Aorta (tissue), 5 donors: ENCODE measurements at regions of chr5 and their contacts with region 1.

Region 1: DNA sequence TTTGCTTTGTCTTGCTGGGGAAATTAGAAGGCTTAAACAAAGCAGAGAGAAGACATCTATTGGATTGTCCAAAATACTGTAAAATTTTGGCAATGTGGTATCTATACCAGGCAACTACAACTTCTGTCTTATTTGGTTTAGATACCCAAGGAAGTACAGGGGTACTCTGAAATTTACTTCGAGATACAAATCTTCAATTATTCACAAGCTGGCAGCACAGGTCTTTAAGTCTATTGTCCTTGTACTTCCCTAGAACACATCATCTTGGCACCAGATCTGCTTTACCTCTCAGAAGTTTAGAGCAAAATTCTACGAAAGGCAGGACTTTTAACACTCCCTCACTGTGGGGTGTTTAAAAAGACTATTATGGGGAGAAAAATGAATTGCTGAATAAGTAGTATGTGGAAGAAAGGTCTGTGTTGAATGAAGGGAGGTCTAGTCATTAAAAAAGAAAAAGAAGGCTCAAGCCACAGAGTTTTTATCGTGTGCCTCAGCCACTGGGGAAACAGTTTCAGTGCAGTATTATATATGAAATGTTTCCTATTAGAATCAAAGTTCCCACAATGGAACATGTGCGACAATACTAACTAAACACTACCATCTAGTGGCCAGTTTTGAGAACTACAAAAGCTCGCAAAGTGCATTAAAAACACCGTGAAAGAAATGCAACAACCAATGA is 93.7 kb downstream of the PDE4D start:
- DNase-seq: no peak
- ATAC-seq: peak; percentile 84
- H3K4me3 ChIP-seq: no peak overlapping the region
- H3K27ac ChIP-seq: no peak overlapping the region
- H3K4me1 ChIP-seq: peaks cover 0 to 4% of the 10 kb centered on the region in 2 donors
- H3K27me3 ChIP-seq: no peaks in the 10 kb centered on the region

Region 2: DNA sequence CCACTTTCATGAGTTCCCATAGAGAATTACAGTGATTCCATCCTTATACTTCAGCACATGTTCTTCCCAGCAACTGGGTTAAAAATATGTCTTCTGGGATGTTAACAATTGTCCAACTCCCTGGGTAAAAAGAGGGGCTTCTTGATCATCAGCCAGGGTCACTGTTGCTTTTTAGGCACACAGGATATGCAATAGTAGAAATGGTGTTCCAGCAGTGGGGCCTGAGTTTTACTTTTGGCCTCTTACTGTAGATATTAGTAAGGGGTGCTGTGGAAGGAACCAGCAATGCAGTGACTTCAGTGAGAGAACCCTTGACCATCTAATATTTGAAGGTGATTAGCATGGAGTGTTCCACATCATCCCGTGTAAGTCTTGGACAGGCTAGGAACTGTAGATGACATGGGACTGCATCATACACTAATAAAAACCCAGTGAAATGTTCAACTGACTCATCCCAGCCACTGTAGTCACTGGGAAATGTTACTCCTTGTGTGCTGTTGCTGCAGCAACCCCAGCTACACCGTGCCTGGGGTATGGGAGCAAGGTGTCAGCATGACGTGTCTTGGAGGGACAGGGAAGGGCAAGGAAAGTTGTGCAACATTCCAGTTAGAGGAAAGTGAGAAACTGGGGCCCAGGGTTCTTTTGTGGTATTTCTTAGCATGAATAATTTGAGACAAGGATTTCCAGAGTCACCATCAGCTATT is 606.0 kb before region 1 on chr5:
- intact Hi-C with region 1: loop called in 1 of 2 experiments (anchors 10 kb)
- DNase-seq: no peak
- ATAC-seq: no peak
- H3K4me3 ChIP-seq: no peak overlapping the region
- H3K27ac ChIP-seq: no peak overlapping the region
- H3K4me1 ChIP-seq: no peaks in the 10 kb centered on the region
- H3K27me3 ChIP-seq: no peaks in the 10 kb centered on the region

Region 3: GRCh38 chr5:59390074-59390659 is 409.6 kb before region 1 on chr5:
- intact Hi-C with region 1: loop called (anchors 2 kb)
- DNase-seq: no peak
- ATAC-seq: no peak
- H3K4me3 ChIP-seq: no peak overlapping the region
- H3K27ac ChIP-seq: no peak overlapping the region
- H3K4me1 ChIP-seq: no peaks in the 10 kb centered on the region
- H3K27me3 ChIP-seq: no peaks in the 10 kb centered on the region

Region 4: DNA sequence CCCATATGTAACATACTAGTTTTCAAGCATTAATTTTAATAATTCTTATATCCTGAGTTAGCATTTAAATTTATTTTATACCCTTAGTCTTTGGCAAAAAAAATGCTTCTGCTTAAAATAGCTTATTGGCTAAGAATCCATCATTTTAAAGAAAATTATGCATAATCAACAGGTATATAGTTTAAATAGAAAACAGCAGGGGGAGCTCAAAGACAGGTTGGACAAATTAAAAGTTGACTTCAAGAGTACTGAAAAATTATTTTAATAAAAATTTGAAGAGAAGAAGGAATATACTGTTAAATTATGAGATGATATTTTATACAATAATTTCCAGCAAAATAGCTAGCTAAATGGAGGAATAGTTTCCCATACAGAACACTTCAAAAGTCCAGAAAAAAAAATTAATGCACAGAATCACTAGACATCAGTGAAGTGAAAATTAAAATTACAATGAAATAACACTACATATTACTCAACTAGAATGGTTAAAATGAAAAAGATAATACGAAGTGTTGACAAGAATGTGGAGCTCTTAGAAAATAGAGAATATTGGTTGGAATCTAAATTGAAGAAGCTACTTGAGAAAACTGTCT is 293.4 kb before region 1 on chr5:
- intact Hi-C with region 1: loop called in 1 of 2 experiments (anchors 5 kb)
- DNase-seq: no peak
- ATAC-seq: no peak
- H3K4me3 ChIP-seq: no peak overlapping the region
- H3K27ac ChIP-seq: no peak overlapping the region
- H3K4me1 ChIP-seq: no peaks in the 10 kb centered on the region
- H3K27me3 ChIP-seq: no peaks in the 10 kb centered on the region

Region 5: GRCh38 chr5:59673438-59674058 is 126.3 kb before region 1 on chr5:
- intact Hi-C with region 1: loop called in 1 of 2 experiments (anchors 10 kb)
- DNase-seq: no peak
- ATAC-seq: no peak
- H3K4me3 ChIP-seq: no peak overlapping the region
- H3K27ac ChIP-seq: no peak overlapping the region
- H3K4me1 ChIP-seq: no peaks in the 10 kb centered on the region
- H3K27me3 ChIP-seq: no peaks in the 10 kb centered on the region